ENCODE measurements at regions of chr4 and their contacts with region 1.

Region 1: GRCh38 chr4:142293536-142293935 is 552.6 kb downstream of the INPP4B start:
- DNase-seq: no peak
- ATAC-seq: no peak
- H3K4me3 ChIP-seq: no peak overlapping the region
- H3K27ac ChIP-seq: no peak overlapping the region
- H3K4me1 ChIP-seq: no peaks in the 10 kb centered on the region
- H3K27me3 ChIP-seq: no peaks in the 10 kb centered on the region
- CTCF ChIP-seq: no peak
- EP300 ChIP-seq: no peak
- POLR2A ChIP-seq: no peak
- RAD21 ChIP-seq: no peak

Region 2: DNA sequence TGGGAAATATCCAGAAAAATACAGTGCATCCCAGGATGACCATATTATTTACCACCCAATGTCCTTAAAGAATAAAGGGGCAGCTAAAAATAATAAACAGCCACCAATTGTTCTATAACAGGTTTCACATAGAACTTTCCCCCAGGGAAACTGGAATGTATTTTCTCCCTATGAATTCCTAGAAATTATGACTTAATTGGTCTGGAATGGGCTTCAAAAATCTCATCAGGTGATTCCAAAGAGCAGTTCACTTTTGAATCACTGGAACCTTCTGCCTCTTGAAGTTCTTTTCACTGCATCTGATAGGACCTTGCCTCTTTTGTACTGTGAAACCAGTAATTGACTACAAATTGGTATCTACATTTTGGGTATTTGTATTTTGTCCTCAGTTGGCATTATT is 953.6 kb before region 1 on chr4:
- CTCF ChIA-PET with region 1: no interaction called
- POLR2A ChIA-PET with region 1: no interaction called
- RAD21 ChIA-PET with region 1: no interaction called
- SMC1A ChIA-PET with region 1: no interaction called
- in situ Hi-C with region 1: no loop called
- intact Hi-C with region 1: no loop called
- DNase-seq: no peak
- ATAC-seq: no peak
- H3K4me3 ChIP-seq: no peak overlapping the region
- H3K27ac ChIP-seq: no peak overlapping the region
- H3K4me1 ChIP-seq: no peaks in the 10 kb centered on the region
- H3K27me3 ChIP-seq: no peaks in the 10 kb centered on the region
- CTCF ChIP-seq: no peak
- EP300 ChIP-seq: no peak
- POLR2A ChIP-seq: no peak
- RAD21 ChIP-seq: no peak

Region 3: GRCh38 chr4:142274137-142274536 is 19.4 kb before region 1 on chr4:
- CTCF ChIA-PET with region 1: interaction called, 3 read pairs
- POLR2A ChIA-PET with region 1: no interaction called
- RAD21 ChIA-PET with region 1: no interaction called
- SMC1A ChIA-PET with region 1: interaction called, 41 read pairs
- in situ Hi-C with region 1: no loop called
- intact Hi-C with region 1: no loop called
- DNase-seq: no peak
- ATAC-seq: no peak
- H3K4me3 ChIP-seq: no peak overlapping the region
- H3K27ac ChIP-seq: no peak overlapping the region
- H3K4me1 ChIP-seq: no peaks in the 10 kb centered on the region
- H3K27me3 ChIP-seq: no peaks in the 10 kb centered on the region; a peak in 1 of 4 replicates
- CTCF ChIP-seq: no peak
- EP300 ChIP-seq: no peak
- POLR2A ChIP-seq: no peak
- RAD21 ChIP-seq: no peak

Region 4: DNA sequence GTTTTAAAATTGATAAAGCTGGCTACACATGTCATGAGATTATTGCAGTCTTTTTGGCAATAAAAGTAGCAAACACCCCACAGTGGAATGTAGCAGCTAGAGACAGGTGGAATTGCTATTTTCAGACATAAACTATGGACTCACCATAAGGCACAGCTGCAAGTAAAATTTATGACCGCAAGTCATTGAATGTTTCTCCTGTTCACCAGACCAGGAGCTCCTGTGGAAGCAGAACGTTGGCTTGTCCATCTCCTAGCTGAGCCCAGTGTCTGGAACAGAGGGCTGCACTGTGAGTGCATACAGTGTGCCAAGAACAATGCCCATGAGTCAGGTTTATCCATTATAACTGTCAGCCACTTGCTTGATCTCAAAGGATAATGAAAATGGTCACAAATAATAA is 14.3 kb after region 1 on chr4:
- CTCF ChIA-PET with region 1: interaction called, 5 read pairs
- POLR2A ChIA-PET with region 1: interaction called, 4 read pairs
- RAD21 ChIA-PET with region 1: no interaction called
- SMC1A ChIA-PET with region 1: interaction called, 38 read pairs
- in situ Hi-C with region 1: no loop called
- intact Hi-C with region 1: no loop called
- DNase-seq: no peak
- ATAC-seq: no peak
- H3K4me3 ChIP-seq: no peak overlapping the region
- H3K27ac ChIP-seq: no peak overlapping the region
- H3K4me1 ChIP-seq: no peaks in the 10 kb centered on the region
- H3K27me3 ChIP-seq: no peaks in the 10 kb centered on the region
- CTCF ChIP-seq: no peak
- EP300 ChIP-seq: no peak
- POLR2A ChIP-seq: no peak
- RAD21 ChIP-seq: no peak

Measured in GM12878 (cell line).